Right ventricle myocardium superior (tissue), 1 donor: ENCODE measurements at regions of chr17 and their contacts with region 1.

Region 1: DNA sequence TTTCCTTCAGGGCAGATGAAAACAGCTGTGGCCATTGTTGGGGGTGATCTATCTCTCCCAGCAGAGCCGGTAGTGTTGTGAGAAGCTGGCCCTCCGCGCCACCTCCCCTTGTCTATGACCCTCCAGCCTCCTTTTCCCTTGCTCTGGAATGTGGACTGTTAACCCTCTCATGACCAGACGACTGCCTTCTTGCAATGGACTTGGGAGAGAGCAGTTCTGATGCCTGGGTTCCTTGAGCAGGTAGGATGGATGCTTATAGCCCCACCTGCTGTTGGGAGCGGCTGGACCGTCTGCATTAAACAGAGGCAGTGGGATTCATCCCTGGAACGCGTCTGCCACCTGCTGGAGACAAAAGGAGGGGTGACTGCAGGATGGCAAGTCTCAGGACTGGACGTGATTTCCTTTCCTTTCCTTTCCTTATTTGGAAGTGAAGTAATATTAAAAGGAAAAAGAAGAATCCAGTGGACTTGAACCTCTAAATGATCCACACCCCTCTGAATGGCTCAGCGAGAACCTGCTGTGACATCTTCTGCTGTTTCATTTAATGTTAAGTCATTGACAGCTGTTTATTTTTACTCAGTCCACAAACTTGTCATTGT is 1.8 kb upstream of the SOST start:
- DNase-seq: peak; percentile 95
- ATAC-seq: peak; percentile 93

Region 2: GRCh38 chr17:43576563-43577229 is 183.7 kb before region 1 on chr17:
- intact Hi-C with region 1: loop called (anchors 10 kb)
- DNase-seq: peak; percentile 73
- ATAC-seq: peak; percentile 88

Region 3: DNA sequence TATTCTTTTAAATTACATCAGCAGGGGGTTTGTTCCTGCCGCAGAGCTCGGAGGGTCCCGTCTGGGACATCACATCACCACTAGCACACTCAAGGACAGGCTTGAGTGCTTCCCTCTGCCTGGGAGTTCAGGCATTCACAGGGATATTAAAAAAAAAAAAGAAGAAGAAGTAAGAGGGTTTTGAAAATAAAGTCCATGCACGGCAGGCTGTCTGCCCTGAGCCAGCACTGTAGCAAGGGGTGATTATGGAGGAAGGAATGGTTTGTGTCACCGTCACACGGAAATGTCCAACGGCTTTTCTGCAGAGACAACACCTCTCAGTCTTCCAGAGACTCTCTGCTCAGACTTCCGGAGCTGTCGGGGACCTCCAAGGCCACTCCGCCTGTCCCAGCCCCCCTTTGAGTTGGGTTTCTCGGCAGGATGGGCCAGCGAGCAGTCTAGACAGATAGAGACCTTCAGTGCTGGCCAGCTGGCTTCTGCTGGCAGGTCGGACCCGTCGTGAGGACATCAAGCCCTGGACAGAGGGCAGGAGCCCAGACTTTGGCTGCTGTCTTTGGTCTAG is 132.2 kb before region 1 on chr17:
- intact Hi-C with region 1: no loop called
- DNase-seq: no peak
- ATAC-seq: peak; percentile 56

Region 4: DNA sequence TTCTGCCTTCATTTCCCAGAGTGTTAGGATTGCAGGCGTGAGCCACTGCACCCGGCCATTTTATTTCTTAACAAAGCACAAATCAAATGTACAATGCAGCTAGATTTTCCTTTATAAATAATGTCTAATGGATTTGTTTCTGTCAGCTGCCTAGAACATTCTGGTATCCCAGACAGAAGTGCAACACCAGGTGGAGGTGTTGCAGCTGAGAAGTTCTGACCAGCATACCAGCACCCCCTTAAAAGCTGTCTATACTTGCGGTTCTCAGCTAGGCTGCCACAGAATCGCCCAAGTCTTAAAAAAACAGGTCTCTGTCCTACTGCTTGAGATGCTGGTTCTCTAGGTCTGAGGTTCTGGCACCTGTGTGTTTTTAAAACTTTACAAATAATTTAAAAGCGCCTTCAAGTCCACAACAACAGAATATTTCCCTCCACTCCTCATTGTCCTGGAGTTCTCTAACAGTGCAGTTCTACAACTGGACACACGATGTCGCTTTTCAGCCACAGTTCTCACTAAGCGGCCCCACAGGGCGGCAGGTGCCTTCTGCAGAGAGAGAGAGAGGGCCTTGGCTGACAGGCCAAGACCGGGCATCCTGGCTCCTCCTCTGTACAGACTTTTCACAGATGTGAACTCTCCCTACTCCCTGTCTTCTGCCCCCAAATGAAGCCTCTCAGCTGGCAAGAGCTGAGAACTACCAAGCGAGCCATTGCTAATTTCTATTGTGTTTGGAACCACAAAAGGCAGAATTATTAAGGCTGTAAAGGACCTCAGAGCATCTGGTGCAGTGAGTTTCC is 66.1 kb before region 1 on chr17:
- intact Hi-C with region 1: loop called (anchors 2 kb)
- DNase-seq: peak; percentile 78
- ATAC-seq: peak; percentile 79